ENCODE measurements at regions of chr2 and their contacts with region 1.

Region 1: DNA sequence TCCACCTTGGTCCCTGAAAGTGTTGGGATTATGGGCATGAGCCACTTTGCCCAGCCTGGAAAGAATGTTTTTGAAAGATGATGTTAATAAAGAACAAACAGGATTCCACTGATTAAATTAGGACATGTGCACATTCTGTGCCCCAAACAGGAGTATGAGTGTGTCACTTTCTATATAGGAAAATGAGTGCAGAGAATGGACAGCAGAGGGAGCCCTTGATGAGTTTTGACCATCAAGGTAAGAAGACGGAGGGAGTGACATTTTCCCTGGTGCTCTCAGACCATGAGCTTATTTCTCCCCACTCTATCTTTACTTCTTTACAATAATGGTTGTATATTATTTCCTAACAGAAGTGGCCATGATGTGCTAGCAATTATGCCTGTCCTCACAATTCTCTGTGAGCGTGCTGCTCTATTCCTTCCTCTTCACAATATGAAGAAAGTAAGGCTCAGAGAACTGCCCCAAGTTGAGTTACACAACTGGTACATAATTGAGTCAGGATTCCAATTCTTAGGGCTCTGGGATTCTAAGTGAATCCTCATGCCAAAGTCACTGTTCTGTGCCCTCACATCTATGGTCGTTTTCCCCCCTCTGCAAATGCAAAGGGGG is 20.6 kb downstream of the RPL37A start:
- DNase-seq: peak; percentile 81 to 89 (median 82)
- ATAC-seq: peak; percentile 94
- H3K4me3 ChIP-seq: no peak overlapping the region
- H3K27ac ChIP-seq: no peak overlapping the region
- H3K4me1 ChIP-seq: no peaks in the 10 kb centered on the region
- H3K27me3 ChIP-seq: no peaks in the 10 kb centered on the region
- CTCF ChIP-seq: peak; percentile 32 to 88 (median 83)
- POLR2A ChIP-seq: no peak

Region 2: GRCh38 chr2:216666461-216667233 is 147.4 kb after region 1 on chr2:
- intact Hi-C with region 1: loop called (anchors 5 kb)
- DNase-seq: peak; percentile 74 to 84 (median 76)
- ATAC-seq: peak; percentile 76
- H3K4me3 ChIP-seq: no peak overlapping the region
- H3K27ac ChIP-seq: no peak overlapping the region
- H3K4me1 ChIP-seq: peaks cover 46% of the 10 kb centered on the region
- H3K27me3 ChIP-seq: no peaks in the 10 kb centered on the region
- CTCF ChIP-seq: peak; percentile 94 to 99 (median 97)
- POLR2A ChIP-seq: no peak

Region 3: DNA sequence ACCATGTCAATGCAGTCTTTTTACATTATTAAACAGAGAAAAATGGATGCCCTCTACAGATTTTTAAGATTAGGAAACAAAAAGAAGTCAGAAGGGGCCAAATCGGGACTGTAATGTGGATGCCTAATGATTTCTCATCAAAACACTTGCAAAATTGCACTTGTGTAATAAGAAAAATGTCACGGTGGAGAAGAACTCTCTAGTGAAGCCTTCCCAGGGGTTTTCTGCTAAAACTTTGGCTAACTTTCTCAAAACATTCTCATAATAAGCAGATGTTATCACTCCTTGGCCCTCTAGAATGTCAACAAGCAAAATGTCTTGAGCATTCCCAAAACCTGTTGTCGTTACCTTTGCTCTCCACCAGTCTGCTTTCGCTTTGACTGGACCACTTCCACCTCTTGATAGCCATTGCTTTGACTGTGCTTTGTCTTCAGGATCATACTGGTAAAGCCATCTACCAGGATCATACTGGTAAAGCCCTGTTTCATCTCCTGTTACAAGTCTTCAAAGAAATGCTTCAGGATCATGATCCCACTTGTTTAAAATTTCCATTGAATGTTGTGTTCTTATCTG is 1256.7 kb after region 1 on chr2:
- intact Hi-C with region 1: no loop called
- DNase-seq: no peak
- ATAC-seq: no peak
- H3K4me3 ChIP-seq: no peak overlapping the region
- H3K27ac ChIP-seq: no peak overlapping the region
- H3K4me1 ChIP-seq: no peaks in the 10 kb centered on the region
- H3K27me3 ChIP-seq: no peaks in the 10 kb centered on the region
- CTCF ChIP-seq: no peak
- POLR2A ChIP-seq: no peak

Measured in body of pancreas (tissue), 4 donors.